ENCODE measurements at regions of chr12 and their contacts with region 1.

Region 1: GRCh38 chr12:66699738-66700482 is 21.0 kb upstream of the GRIP1 start:
- DNase-seq: no peak
- H3K4me3 ChIP-seq: no peak overlapping the region
- H3K27ac ChIP-seq: no peak overlapping the region
- H3K4me1 ChIP-seq: no peaks in the 10 kb centered on the region
- H3K27me3 ChIP-seq: peaks cover 0 to 10% of the 10 kb centered on the region in 2 donors
- CTCF ChIP-seq: no peak

Region 2: DNA sequence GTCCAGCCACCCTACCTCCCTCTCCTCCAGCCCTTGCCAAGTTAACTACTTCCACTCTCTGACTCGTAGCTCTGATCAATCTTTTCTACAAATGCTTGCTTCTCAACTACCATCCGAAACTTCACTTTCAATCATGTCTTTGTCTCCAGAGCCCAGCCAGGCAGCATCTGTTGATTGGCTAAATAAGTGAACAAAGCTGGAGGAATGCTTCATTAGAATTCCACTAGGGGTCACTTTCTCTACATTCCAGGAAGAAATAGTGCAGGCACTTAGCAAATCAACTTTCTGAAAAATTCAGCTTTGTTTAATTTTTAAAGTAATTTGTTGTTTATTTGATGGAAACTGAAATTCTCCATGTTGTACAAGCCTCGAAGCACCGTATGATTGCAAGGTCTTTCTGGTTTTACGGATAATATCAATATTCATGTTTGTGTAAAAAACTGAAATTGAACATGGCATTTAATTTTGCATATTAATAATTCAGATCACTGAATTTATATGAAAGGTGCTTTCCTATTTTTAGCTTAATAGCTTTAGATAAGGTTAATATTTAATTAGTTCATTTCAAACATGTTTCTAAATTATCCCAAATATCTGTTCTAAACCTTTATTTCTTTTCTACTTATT is 430.0 kb before region 1 on chr12:
- intact Hi-C with region 1: loop called (anchors 5 kb)
- DNase-seq: no peak
- H3K4me3 ChIP-seq: no peak overlapping the region
- H3K27ac ChIP-seq: no peak overlapping the region
- H3K4me1 ChIP-seq: no peaks in the 10 kb centered on the region
- H3K27me3 ChIP-seq: no peaks in the 10 kb centered on the region
- CTCF ChIP-seq: peak; percentile 46 to 56

Measured in tibial artery (tissue), 4 donors.